Left cardiac atrium (tissue), 4 donors: ENCODE measurements at regions of chr1 and their contacts with region 1.

Region 1: GRCh38 chr1:41662061-41662764 is 177.7 kb upstream of the EDN2 start:
- DNase-seq: peak; percentile 86
- ATAC-seq: peak; percentile 79 to 88

Region 2: GRCh38 chr1:41573785-41574713 is 88.2 kb before region 1 on chr1:
- intact Hi-C with region 1: loop called in 1 of 2 experiments (anchors 10 kb)
- DNase-seq: peak; percentile 85
- ATAC-seq: peak; percentile 92 to 96

Region 3: DNA sequence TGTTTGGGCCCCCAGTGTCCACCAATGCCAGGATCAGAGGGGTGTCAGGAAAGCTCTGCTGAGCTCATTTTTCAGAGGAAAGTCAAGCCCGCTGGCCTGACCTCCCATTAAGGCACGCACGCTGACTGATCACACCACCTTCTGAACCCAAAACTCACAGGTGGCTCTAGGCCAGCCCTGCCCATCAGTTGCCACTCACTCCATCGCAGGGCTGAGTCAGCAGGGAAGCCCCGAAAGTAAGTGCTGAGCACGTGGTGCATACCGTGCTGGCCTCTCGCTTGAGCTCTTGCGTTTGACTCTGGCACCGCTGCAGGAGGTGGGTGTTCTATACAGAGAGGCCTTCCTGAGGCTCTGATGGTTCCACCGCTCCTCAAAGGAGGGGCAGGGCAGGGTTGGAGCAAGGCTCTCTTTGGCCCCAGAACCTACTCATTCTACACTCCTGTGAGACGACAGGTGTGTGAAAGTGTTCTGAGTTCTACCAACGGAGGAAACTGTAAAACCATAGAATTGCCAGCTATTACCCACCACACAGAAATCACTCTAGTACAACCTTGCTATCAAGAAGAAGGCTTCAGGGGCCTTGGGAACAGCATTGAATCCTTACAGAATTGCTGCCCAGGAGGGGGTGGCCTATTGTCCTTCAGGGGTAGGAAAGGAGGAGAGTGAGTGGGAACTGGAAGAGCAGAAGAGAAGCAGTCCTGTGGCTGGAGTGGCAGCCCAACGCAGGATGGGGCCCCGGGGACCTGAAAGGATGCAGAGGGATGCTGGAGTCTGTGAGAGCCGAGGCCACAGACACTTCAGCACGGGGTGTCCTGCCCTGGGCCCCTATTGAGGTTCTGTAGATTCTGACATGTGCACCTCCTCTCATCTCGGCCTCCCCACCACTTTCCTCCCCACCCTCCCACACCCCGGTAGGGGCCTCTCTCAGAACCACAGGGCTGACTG is 37.0 kb after region 1 on chr1:
- intact Hi-C with region 1: no loop called
- DNase-seq: peak; percentile 57
- ATAC-seq: peak; percentile 70 to 76